Activated CD8-positive, alpha-beta memory T cell treated with anti-CD3 and anti-CD28 coated beads, Interleukin-2, amount 10 ng/mL, durations not matched to agents 7 days and 5 days (primary cell): ENCODE measurements at regions of chr15 and their contacts with region 1.

Region 1: DNA sequence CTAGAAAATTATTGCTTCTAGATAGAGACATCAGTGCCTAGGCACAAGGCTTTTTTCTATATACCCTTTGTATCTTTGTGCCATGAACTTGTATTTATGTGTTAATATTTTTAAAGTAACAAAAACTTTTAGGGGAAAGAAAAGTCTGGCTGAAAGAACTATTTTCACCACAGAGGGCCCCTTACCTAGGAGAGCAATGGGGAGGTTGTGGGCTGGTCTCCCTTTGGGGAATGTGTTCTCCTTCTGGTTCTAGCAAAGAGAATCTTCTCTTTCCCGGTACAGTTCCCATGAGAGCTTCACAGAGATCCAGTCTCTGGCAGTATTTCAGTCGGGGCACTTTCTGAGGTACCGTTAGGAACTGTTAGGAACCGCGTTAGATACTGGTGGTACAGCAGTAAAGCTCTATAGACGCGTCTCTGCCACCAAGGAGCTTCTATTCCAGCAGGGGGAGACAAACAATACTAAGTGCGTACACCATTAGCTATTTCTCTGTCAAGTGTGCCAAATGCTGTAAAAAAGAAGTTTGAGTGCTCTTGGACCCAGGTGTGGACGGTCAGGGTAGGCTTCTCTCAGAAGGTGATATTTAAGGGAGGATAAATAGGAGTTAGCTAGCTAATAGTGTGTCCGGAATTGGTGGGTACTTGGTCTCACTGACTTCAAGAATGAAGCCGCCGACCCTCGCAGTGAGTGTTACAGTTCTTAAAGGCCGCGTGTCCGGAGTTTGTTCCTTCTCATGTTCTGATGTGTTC is 4.6 kb upstream of the EPB42 start:
- DNase-seq: peak; percentile 69
- ATAC-seq: peak; percentile 95
- H3K4me3 Mint-ChIP-seq: no peak overlapping the region
- H3K27ac Mint-ChIP-seq: no peak overlapping the region
- H3K4me1 Mint-ChIP-seq: peaks cover 5% of the 10 kb centered on the region
- H3K27me3 Mint-ChIP-seq: peaks cover 24% of the 10 kb centered on the region

Region 2: GRCh38 chr15:42933886-42934667 is 291.3 kb before region 1 on chr15:
- CTCF ChIA-PET with region 1: no interaction called
- DNase-seq: no peak
- ATAC-seq: no peak
- H3K4me3 Mint-ChIP-seq: no peak overlapping the region
- H3K27ac Mint-ChIP-seq: no peak overlapping the region
- H3K4me1 Mint-ChIP-seq: no peaks in the 10 kb centered on the region
- H3K27me3 Mint-ChIP-seq: peaks cover 2% of the 10 kb centered on the region

Region 3: GRCh38 chr15:43151688-43152087 is 73.7 kb before region 1 on chr15:
- CTCF ChIA-PET with region 1: no interaction called
- DNase-seq: no peak
- ATAC-seq: peak; percentile 77
- H3K4me3 Mint-ChIP-seq: no peak overlapping the region
- H3K27ac Mint-ChIP-seq: peak overlapping the region; percentile 3
- H3K4me1 Mint-ChIP-seq: peaks cover 23% of the 10 kb centered on the region
- H3K27me3 Mint-ChIP-seq: no peaks in the 10 kb centered on the region

Region 4: DNA sequence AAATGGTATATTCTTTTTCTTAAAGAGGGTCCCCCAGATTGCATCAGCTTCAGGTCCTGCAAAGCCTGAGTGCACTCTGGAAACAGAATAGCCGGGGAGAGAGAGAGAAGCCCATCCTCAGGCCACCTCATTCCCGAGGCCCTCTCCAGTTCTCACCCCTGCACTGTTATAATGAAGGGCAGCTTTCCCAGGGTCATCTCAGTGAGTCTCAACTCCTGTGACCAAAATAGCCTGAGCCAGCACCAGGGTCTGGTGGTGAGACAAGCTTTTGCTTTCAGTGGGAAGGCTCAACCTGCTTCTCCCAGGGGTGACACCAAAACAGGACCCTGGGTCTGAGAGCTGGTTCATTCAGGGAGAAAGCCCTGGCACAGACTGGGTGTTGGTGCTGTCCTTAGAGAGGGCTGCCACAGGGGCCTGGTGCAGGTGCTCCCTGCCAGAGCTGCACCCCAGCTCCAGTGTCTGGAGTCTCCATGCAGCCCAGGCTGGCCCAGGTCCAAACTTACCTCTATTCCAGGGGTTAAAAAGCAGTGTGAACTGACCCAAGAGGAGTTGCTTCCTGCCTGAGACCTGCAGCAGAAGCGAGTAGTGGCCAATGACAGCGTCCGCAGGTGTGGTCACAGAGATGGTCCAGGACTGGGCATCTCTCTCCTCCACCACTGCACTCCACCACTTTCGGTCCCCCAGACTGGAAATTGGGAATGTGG is 10.6 kb before region 1 on chr15:
- CTCF ChIA-PET with region 1: interaction called, 30 read pairs
- DNase-seq: no peak
- ATAC-seq: no peak
- H3K4me3 Mint-ChIP-seq: no peak overlapping the region
- H3K27ac Mint-ChIP-seq: no peak overlapping the region
- H3K4me1 Mint-ChIP-seq: no peaks in the 10 kb centered on the region
- H3K27me3 Mint-ChIP-seq: peaks cover 10% of the 10 kb centered on the region

Region 5: GRCh38 chr15:43241100-43241499 is 15.7 kb after region 1 on chr15:
- CTCF ChIA-PET with region 1: interaction called, 37 read pairs
- DNase-seq: no peak
- ATAC-seq: no peak
- H3K4me3 Mint-ChIP-seq: no peak overlapping the region
- H3K27ac Mint-ChIP-seq: no peak overlapping the region
- H3K4me1 Mint-ChIP-seq: peaks cover 28% of the 10 kb centered on the region
- H3K27me3 Mint-ChIP-seq: peaks cover 4% of the 10 kb centered on the region

Region 6: DNA sequence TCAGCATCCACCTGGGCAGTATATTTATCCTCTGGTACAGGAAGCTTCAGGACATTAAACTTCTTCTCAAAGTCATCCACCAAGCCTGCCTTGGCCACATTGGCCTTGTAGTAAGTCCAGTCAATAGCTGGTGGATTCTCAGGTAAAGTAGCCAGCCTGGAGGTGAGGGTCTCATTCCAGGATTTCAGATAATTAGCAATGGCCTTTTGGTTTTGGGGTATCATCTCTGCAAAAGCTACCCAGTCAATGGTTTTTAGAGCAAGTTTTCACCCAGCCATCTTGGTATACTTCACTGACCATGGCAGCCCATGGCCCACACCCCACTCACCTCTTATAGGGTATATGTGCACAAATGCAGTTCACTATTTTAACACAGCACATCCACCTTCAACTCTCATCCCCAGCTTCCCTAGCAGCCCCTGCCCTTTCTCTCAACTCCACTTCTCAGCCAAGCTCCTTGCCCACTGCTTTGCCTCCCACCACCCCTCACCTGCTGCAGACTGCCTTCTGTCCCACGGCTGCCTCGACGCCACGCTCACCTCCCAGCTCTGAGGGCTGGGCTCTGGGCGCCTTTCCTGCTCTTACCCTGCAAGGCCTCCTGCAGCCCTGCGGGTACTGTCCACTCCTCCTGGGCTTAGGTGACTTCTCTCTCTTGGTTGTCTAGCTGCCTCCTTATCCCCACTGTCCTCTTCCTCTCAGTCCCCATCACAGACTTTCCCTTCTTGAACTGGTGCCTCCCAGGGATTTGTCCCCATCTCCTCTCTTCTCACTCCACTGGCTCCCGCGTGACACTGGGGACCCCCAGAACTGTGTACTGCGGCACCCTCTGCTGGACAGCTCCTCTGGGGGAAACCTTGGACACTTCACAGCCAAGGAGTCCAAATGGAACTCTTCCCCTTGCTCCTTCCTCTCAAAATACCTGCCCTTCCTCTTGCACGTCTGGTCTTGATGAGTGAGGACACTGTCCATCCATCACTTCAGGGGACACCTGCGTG is 43.0 kb after region 1 on chr15:
- CTCF ChIA-PET with region 1: interaction called, 72 read pairs
- DNase-seq: peak; percentile 61
- ATAC-seq: no peak
- H3K4me3 Mint-ChIP-seq: no peak overlapping the region
- H3K27ac Mint-ChIP-seq: no peak overlapping the region
- H3K4me1 Mint-ChIP-seq: peaks cover 9% of the 10 kb centered on the region
- H3K27me3 Mint-ChIP-seq: peaks cover 47% of the 10 kb centered on the region

Region 7: GRCh38 chr15:43285609-43286037 is 60.2 kb after region 1 on chr15:
- CTCF ChIA-PET with region 1: interaction called, 157 read pairs
- DNase-seq: peak; percentile 67
- ATAC-seq: peak; percentile 80
- H3K4me3 Mint-ChIP-seq: no peak overlapping the region
- H3K27ac Mint-ChIP-seq: no peak overlapping the region
- H3K4me1 Mint-ChIP-seq: peaks cover 6% of the 10 kb centered on the region
- H3K27me3 Mint-ChIP-seq: peaks cover 14% of the 10 kb centered on the region

Region 8: DNA sequence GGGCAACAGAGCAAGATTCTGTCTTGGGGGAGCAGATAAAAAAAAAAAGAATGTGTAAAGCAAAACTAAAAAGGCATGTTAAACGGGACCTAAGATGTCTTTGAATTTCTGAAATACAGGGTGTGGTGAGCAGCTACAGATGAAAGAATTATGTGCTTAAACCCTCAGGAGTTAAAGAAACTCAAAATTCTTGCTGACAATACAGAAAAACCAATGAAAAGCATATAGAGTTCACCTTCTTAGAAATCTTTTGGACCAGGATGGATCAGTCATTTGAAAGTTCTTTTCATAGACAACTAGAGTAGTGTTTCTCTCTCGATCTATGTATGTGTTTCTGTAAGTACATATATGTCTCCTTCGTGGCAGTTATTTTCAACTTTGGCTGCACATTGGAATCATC is 176.9 kb after region 1 on chr15:
- CTCF ChIA-PET with region 1: no interaction called
- DNase-seq: no peak
- ATAC-seq: no peak
- H3K4me3 Mint-ChIP-seq: no peak overlapping the region
- H3K27ac Mint-ChIP-seq: no peak overlapping the region
- H3K4me1 Mint-ChIP-seq: no peaks in the 10 kb centered on the region
- H3K27me3 Mint-ChIP-seq: no peaks in the 10 kb centered on the region